ENCODE measurements at regions of chr10 and their contacts with region 1.

Region 1: GRCh38 chr10:95430231-95430951 is 130.8 kb downstream of the SORBS1 start:
- DNase-seq: peak; percentile 73
- H3K4me3 Mint-ChIP-seq: no peak overlapping the region
- H3K27ac Mint-ChIP-seq: no peak overlapping the region
- H3K4me1 Mint-ChIP-seq: peaks cover 11% of the 10 kb centered on the region
- H3K27me3 Mint-ChIP-seq: peaks cover 7% of the 10 kb centered on the region
- CTCF ChIP-seq: peak; percentile 89

Region 2: GRCh38 chr10:95394161-95394880 is 36.1 kb before region 1 on chr10:
- CTCF ChIA-PET with region 1: interaction called, 13 read pairs
- POLR2A ChIA-PET with region 1: interaction called, 3 read pairs
- intact Hi-C with region 1: no loop called
- DNase-seq: peak; percentile 83
- H3K4me3 Mint-ChIP-seq: peak overlapping the region; percentile 48
- H3K27ac Mint-ChIP-seq: peak overlapping the region; percentile 92
- H3K4me1 Mint-ChIP-seq: peaks cover 17% of the 10 kb centered on the region
- H3K27me3 Mint-ChIP-seq: no peaks in the 10 kb centered on the region
- CTCF ChIP-seq: no peak

Region 3: DNA sequence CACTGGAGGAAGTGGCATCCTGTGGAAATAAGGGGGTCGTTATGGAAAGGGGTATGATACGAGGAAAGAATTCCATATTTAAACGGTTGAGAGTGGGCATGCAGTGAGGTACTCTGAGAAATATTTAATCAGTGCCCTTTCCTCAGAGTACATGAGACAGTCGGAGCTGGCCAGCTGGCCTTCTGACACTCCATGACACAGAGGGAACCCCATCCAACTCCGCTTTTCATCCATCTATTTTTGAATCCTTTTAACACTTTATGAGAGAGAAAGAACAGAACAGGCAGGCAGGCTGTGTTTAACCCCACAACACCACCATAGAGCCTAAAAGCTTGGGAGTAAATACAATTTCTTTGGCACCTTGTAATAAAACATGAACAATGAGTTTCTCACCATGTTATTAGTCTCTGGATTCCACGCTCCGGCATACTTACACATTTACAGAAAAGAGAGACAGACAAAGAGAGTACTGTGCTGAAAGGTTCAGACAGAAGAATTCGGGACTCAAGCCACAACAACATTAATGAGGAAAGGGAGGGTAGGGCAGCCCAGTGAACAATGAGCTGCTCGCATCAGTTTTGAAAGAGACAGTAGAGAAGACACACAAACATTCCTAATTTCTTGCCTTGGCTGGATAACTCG is 15.4 kb before region 1 on chr10:
- CTCF ChIA-PET with region 1: interaction called, 52 read pairs
- POLR2A ChIA-PET with region 1: no interaction called
- intact Hi-C with region 1: no loop called
- DNase-seq: no peak
- H3K4me3 Mint-ChIP-seq: no peak overlapping the region
- H3K27ac Mint-ChIP-seq: no peak overlapping the region
- H3K4me1 Mint-ChIP-seq: no peaks in the 10 kb centered on the region
- H3K27me3 Mint-ChIP-seq: peaks cover 14% of the 10 kb centered on the region
- CTCF ChIP-seq: no peak

Region 4: GRCh38 chr10:95474228-95475002 is 44.0 kb after region 1 on chr10:
- CTCF ChIA-PET with region 1: interaction called, 17 read pairs
- POLR2A ChIA-PET with region 1: interaction called, 3 read pairs
- intact Hi-C with region 1: no loop called
- DNase-seq: peak; percentile 84
- H3K4me3 Mint-ChIP-seq: peak overlapping the region; percentile 30
- H3K27ac Mint-ChIP-seq: peak overlapping the region; percentile 90
- H3K4me1 Mint-ChIP-seq: peaks cover 31% of the 10 kb centered on the region
- H3K27me3 Mint-ChIP-seq: no peaks in the 10 kb centered on the region
- CTCF ChIP-seq: no peak

Region 5: DNA sequence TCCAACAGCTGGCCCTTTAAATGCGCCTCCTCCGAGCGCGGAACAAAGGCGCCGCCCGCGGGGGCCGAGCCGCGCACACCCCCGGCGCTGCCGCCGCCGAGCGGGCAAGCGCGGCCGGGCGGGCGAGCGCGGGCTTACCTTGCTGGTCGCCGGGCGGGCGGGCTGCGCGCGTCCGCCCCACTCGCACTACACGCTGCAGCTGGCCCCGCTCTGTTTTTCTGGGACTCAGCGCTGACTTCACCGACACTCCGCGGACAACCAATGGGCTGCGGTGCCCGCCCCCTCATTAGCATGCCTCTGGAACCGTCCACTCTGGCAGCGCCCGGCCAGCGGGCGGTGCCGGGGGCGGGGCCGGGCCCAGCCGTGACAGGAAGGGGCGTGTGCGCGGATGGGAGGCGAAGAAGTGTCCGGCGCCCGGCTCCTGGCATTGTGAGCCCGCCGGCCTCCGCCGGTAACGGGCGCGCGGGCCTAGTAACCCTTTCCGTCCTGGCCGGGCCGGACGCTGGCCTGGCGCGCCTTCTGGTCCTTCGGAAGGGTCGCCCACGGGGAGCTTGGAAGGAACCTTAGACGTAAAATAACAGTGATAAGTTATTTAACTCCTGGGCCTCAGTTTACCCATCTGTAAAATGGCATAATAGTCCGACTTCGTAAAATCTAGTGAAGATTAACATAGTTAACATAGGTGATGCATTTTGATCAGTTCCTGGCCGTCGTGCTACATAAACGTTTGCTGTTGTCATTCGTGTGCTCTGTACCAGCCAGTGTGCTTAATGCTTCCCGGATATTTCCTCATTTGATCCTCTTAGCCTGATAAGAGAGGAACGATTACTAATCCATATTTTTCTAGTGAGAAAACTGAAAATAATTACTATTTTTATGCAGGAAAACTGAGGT is 131.0 kb after region 1 on chr10 and contains the start of gene SORBS1:
- CTCF ChIA-PET with region 1: interaction called, 12 read pairs
- POLR2A ChIA-PET with region 1: interaction called, 4 read pairs
- intact Hi-C with region 1: no loop called
- DNase-seq: peak; percentile 96
- H3K4me3 Mint-ChIP-seq: peak within 1 kb of the TSS; percentile 88
- H3K27ac Mint-ChIP-seq: no peak within 1 kb of the TSS
- H3K4me1 Mint-ChIP-seq: no peaks in the 10 kb centered on the region
- H3K27me3 Mint-ChIP-seq: peaks cover 35% of the 10 kb centered on the region
- CTCF ChIP-seq: no peak
- total RNA-seq, gene SORBS1: 0.61 and 1.0 TPM in 2 replicates

Region 6: GRCh38 chr10:95588025-95588424 is 157.6 kb after region 1 on chr10:
- CTCF ChIA-PET with region 1: interaction called, 41 read pairs
- POLR2A ChIA-PET with region 1: interaction called, 3 read pairs
- intact Hi-C with region 1: no loop called
- DNase-seq: peak; percentile 27
- H3K4me3 Mint-ChIP-seq: no peak overlapping the region
- H3K27ac Mint-ChIP-seq: no peak overlapping the region
- H3K4me1 Mint-ChIP-seq: no peaks in the 10 kb centered on the region
- H3K27me3 Mint-ChIP-seq: peaks cover 10% of the 10 kb centered on the region
- CTCF ChIP-seq: no peak

Measured in MCF 10A (cell line).